MCF 10A (cell line): ENCODE measurements at regions of chr12 and their contacts with region 1.

Region 1: GRCh38 chr12:116708826-116709756 is 28.8 kb downstream of the SPRING1 start:
- DNase-seq: peak; percentile 61
- H3K4me3 Mint-ChIP-seq: no peak overlapping the region
- H3K27ac Mint-ChIP-seq: no peak overlapping the region
- H3K4me1 Mint-ChIP-seq: peaks cover 9% of the 10 kb centered on the region
- H3K27me3 Mint-ChIP-seq: no peaks in the 10 kb centered on the region
- CTCF ChIP-seq: peak; percentile 71

Region 2: GRCh38 chr12:116726694-116727093 is 17.6 kb after region 1 on chr12:
- CTCF ChIA-PET with region 1: interaction called, 19 read pairs
- POLR2A ChIA-PET with region 1: no interaction called
- intact Hi-C with region 1: no loop called
- DNase-seq: no peak
- H3K4me3 Mint-ChIP-seq: no peak overlapping the region
- H3K27ac Mint-ChIP-seq: no peak overlapping the region
- H3K4me1 Mint-ChIP-seq: no peaks in the 10 kb centered on the region
- H3K27me3 Mint-ChIP-seq: no peaks in the 10 kb centered on the region
- CTCF ChIP-seq: no peak